Mucosa of descending colon (tissue), 3 donors: ENCODE measurements at regions of chr2 and their contacts with region 1.

Region 1: DNA sequence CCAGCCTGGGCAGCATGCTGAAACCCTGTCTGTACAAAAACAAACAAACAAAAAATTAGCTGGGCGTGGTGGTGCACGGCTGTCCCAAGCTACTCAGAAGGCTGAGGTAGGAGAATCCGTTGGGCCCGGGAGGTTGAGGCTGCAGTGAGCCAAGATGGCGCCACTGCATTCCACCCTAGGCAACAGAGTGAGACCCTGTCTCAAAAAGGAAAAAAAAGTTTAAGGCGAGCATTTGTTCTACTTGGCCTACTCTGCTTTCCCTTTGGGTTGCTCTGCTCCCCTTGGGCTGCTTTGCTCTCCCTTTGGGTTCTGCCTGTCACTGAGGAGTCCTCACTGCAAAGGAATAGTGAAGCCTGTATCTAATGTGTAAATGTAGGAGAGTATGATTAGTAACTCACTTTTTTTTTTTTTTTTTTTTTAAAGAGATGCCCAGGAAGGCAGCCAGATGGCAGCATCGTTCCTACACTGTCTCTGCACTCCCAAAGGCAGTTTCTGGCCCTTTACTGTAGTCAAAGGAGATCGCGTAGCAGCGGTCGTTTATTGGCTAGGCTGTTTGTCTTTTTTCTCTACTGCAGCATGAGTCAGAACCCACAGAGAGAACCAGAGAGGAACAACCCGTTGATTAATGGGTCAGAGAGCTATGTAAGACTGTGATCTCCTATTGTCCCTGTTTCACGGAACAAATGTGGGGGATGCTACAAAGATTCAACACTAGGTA is 118.3 kb upstream of the CWC22 start:
- DNase-seq: peak in 2 of 3 donors; percentile 36 to 69
- ATAC-seq: peak; percentile 89
- H3K4me3 ChIP-seq: no peak overlapping the region
- H3K4me1 ChIP-seq: peaks cover 8% of the 10 kb centered on the region
- CTCF ChIP-seq: peak; percentile 30

Region 2: DNA sequence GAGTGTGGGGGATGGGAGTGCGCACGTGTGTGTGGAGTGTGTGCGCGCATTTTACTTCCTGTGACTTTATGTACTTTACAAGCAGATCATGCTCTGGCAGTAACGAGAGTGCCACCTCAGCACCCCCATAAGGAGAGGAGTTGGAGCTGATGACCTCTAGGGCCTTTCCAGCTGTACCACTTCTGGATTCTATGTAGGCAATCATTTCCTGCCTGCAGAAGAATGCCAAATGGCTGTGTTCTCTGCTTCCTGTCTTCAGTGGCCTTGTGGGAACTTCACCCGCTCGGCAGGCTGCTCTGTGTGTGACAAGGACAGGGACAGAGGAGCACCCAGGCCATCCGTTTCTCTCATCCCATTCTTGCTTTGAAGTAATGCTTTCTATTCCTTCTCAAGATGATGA is 241.2 kb before region 1 on chr2:
- intact Hi-C with region 1: no loop called
- DNase-seq: no peak
- ATAC-seq: no peak
- H3K4me3 ChIP-seq: no peak overlapping the region
- H3K4me1 ChIP-seq: no peaks in the 10 kb centered on the region
- CTCF ChIP-seq: no peak

Region 3: DNA sequence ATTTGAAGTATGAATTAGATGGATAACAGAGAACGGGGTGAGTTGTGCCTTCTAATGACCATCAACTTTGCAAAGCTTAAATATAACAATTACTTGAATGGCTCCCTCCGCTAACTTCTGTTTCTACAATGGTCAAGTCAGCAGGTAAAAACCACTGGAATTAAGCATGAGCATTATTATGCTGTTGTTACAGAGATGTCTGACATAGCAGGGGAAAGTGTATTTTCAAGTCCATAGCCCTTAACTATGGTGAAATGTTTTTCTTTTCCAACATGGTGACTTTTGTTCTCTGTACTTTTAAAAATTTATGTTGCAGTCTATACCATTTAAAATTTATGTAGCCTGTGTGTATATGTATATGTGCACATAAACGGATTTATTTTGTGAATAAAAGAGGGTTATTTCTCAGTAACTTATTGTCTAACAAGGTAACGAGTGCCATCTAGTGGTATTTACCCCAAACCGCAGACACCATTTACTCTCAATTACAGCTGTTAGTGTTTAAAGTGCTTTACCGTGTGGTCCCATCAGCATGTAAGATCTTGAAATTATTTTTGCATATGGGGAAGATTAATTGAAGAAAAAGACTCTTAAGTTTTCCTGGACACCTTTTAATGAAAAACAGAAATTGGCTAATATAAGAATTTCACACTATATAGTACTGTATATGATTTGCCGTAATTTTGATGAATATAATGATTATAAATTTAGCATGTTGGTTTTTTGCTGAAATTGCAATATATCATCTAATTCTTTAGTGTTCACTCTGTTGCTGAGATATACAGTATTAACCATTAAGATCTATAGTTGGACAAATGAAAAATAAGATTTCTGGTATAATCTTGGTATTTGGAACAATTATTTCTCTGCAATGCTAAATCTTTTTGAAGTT is 933.2 kb after region 1 on chr2:
- intact Hi-C with region 1: loop called in 1 of 2 experiments (anchors 5 kb)
- DNase-seq: peak in 1 of 3 donors; percentile 69
- ATAC-seq: peak; percentile 46
- H3K4me3 ChIP-seq: no peak overlapping the region
- H3K4me1 ChIP-seq: no peaks in the 10 kb centered on the region
- CTCF ChIP-seq: peak; percentile 48

Region 4: GRCh38 chr2:181466661-181467576 is 1341.5 kb after region 1 on chr2:
- intact Hi-C with region 1: loop called (anchors 10 kb)
- DNase-seq: peak; percentile 72 to 90 (median 73)
- ATAC-seq: peak; percentile 60
- H3K4me3 ChIP-seq: no peak overlapping the region
- H3K4me1 ChIP-seq: no peaks in the 10 kb centered on the region
- CTCF ChIP-seq: peak; percentile 43

Region 5: DNA sequence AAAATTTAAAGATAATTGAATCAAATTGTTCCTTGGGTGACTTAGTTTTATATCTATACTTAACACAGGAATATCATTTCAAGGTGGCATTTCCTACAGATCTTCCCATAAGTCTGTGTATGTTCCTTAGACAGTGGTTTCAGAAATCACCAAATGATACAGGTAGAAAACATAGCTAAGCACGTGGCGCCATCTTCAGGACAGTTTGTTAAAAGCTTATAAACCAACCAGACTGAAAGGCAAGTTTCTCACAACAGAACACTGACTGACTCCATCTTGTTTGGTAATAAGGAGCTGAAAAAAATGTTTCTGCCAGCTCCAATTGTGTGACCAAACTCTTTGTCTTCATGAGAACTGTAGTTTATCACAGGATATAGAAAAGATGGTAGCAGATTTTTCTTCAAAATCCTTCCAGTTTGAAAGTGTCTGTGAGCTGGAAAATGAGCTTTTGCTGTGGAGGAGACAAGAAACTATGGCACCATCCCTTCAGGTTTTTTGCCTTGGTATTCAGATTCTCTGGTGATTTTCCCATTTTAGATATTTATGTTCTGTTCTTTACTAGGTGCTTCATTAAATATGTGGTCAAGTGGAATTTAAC is 1589.7 kb after region 1 on chr2:
- intact Hi-C with region 1: loop called (anchors 10 kb)
- DNase-seq: peak in 2 of 3 donors; percentile 27 to 91
- ATAC-seq: peak; percentile 79
- H3K4me3 ChIP-seq: no peak overlapping the region
- H3K4me1 ChIP-seq: no peaks in the 10 kb centered on the region
- CTCF ChIP-seq: peak; percentile 48